Activated T-helper 2 cell treated with anti-CD3 and anti-CD28 coated beads, Interferon-gamma antibody, Interleukin-2, Interleukin-4, amounts not matched to agents 10 μg/mL and 5 μg/mL and 100 μg/mL, durations not matched to agents 14 hours and 24 hours and 36 hours (primary cell): ENCODE measurements at regions of chr2 and their contacts with region 1.

Region 1: DNA sequence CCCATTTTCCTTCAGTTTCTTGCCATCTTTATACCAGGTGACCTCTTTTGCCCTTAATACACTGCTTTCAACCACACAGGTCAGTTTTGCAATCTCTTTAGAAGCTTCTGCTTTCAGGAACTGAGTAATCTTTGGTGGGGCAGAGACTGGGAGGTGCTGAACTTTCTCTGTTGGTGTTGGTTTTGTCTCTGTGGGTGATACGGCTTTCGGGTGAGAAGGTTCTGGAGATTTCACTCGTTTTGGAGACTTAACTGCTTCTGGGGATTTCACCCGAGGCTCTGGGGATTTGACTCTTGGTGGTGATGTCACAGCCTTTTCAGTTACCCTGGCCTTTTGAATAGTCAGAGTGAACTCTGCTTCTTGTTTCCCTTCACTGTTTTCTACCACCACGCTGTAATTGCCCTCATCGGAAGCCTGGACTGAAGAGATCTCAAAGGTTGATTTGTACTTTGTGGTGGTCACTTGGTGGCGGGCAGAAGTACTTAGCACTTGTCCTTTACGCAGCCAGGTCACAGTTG is 50.4 kb downstream of the PLEKHA3 start:
- DNase-seq: peak; percentile 43
- H3K4me3 Mint-ChIP-seq: peak overlapping the region; percentile 54
- H3K27ac Mint-ChIP-seq: peak overlapping the region; percentile 76
- H3K4me1 Mint-ChIP-seq: peaks cover 62% of the 10 kb centered on the region
- H3K27me3 Mint-ChIP-seq: no peaks in the 10 kb centered on the region

Region 2: GRCh38 chr2:178331474-178332432 is 198.9 kb before region 1 on chr2:
- intact Hi-C with region 1: no loop called
- DNase-seq: no peak
- H3K4me3 Mint-ChIP-seq: no peak overlapping the region
- H3K27ac Mint-ChIP-seq: no peak overlapping the region
- H3K4me1 Mint-ChIP-seq: no peaks in the 10 kb centered on the region
- H3K27me3 Mint-ChIP-seq: peaks cover 4% of the 10 kb centered on the region

Region 3: DNA sequence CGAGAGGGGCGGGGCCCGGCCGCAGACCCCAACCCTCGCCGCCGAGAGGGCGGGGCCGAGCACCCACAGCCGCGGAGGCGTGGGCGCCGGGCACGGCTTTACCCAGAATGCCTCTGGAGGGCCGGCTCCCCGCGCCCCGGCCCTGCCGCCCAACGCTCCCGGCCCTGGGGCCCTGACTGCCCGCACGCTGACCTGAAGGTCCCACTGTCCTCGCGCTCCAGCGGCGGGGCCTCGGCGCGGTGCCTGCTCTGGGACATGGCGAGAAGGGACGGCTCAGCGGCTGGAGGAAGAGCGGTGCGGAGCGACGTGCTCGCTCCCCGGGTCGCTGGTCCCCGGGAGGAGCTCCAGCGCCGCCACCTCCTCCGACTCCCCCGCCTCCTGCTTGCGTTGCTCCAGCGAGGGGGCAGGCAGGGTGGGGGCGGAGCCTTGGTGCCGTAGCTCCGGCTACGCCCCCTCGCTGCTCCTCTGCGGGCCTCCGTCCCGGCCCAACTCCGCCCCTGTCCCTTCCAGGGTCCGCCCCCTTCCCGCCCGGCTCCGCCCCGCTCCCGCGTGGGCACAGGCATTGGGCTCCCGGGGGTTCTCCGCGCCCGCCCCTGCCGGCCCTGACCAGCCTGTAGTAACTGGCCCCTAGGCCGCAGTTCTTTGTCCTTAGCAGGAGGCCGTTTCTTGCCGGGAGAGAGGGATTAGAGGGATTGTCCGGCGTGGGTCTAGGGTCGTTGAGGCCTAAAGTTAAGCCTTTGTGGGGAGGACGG is 79.7 kb before region 1 on chr2 and contains the starts of genes PJVK and PRKRA:
- intact Hi-C with region 1: loop called (anchors 2 kb)
- DNase-seq: peak; percentile 94
- H3K4me3 Mint-ChIP-seq: peak within 1 kb of the TSS; percentile 92
- H3K27ac Mint-ChIP-seq: peak within 1 kb of the TSS; percentile 99
- H3K4me1 Mint-ChIP-seq: peaks cover 29% of the 10 kb centered on the region
- H3K27me3 Mint-ChIP-seq: peaks cover 6% of the 10 kb centered on the region
- total RNA-seq, gene PJVK: 1.7 and 2.0 TPM in 2 replicates
- total RNA-seq, gene PRKRA: 65.8 and 67.8 TPM in 2 replicates

Region 4: GRCh38 chr2:178478439-178479274 is 52.0 kb before region 1 on chr2 and contains the start of gene FKBP7:
- intact Hi-C with region 1: loop called (anchors 1 kb)
- DNase-seq: peak; percentile 74
- H3K4me3 Mint-ChIP-seq: peak within 1 kb of the TSS; percentile 90
- H3K27ac Mint-ChIP-seq: peak within 1 kb of the TSS; percentile 92
- H3K4me1 Mint-ChIP-seq: peaks cover 36% of the 10 kb centered on the region
- H3K27me3 Mint-ChIP-seq: no peaks in the 10 kb centered on the region
- total RNA-seq, gene FKBP7: 3.2 and 6.6 TPM in 2 replicates

Region 5: GRCh38 chr2:178514664-178515063 is 16.0 kb before region 1 on chr2:
- intact Hi-C with region 1: loop called (anchors 1 kb)
- DNase-seq: no peak
- H3K4me3 Mint-ChIP-seq: peak overlapping the region; percentile 58
- H3K27ac Mint-ChIP-seq: peak overlapping the region; percentile 78
- H3K4me1 Mint-ChIP-seq: peaks cover 27% of the 10 kb centered on the region
- H3K27me3 Mint-ChIP-seq: no peaks in the 10 kb centered on the region

Region 6: DNA sequence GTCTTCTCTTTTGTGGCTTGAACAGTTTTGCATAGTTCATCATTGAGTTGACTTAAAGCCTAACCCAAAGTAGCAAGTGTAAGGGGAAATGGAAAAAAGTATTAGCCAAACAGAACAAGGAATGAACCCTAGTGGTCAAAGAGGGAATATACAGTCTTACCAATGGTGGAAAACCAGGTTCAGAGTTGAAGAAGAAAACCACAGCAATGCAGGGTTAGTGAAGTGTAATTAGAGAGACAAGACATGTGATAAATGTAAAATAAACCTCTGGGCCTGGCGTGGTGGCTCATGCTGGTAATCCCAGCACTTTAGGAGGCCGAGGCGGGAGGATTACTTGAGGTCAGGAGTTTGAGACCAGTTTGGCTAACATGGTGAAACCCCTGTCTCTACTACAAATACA is 274.1 kb after region 1 on chr2:
- intact Hi-C with region 1: no loop called
- DNase-seq: no peak
- H3K4me3 Mint-ChIP-seq: no peak overlapping the region
- H3K27ac Mint-ChIP-seq: no peak overlapping the region
- H3K4me1 Mint-ChIP-seq: no peaks in the 10 kb centered on the region
- H3K27me3 Mint-ChIP-seq: no peaks in the 10 kb centered on the region

Region 7: DNA sequence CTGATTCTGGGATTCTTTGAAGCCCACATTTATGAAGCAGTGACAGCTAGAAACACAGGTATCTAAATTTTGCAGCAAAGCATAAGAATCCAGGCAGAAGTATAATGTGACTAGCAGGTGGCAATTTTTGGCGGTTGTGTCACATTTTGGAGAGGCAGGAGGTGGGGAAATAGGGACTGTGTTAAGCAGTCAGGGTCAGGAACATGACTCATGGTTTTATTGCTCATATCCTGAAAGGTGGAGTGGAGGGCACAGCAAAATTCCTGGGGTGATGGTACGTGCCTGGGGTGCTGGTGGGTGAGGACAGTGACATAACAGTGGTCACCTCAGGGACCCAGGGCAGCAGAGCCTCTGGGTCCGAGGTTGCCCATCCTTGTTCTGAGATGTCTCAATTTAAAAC is 340.0 kb after region 1 on chr2:
- intact Hi-C with region 1: loop called (anchors 5 kb)
- DNase-seq: no peak
- H3K4me3 Mint-ChIP-seq: no peak overlapping the region
- H3K27ac Mint-ChIP-seq: no peak overlapping the region
- H3K4me1 Mint-ChIP-seq: peaks cover 22% of the 10 kb centered on the region
- H3K27me3 Mint-ChIP-seq: no peaks in the 10 kb centered on the region

Region 8: DNA sequence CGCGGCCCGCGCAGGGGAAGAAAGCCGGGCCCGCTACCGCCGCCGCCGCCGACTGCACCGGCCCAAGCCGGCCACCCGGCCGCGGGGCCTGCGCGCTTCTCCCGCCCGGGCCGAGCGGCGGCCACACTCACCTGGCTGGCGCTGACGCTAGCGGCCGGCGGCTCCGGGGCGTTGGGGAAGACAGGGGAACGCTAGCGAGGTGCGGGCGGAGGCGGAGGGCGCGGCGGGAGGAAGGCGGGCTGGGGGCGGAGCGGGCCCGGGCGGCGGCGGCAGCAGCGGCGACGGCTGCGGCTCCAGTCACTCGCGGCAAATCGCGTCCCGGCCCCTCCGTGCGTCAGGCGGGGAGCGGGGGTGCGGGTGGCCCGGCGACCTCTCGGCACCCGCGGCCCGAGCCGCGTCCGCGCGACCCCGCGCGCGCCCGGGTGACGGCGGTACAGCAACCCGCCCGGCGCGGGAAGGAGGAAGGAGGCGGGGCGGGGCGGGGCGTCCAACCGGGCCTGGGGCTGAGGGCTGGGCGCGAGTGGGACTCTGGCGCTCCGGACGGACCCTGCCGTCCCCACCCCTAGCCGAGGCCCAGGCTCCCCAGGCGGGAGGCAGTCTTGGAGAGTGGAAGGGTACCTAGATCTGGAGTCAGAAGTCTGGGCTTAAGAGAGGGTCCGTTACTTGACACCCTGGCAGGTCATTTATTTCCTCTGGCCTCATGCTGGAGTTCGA is 733.8 kb after region 1 on chr2 and contains the start of gene SESTD1:
- intact Hi-C with region 1: loop called (anchors 5 kb)
- DNase-seq: peak; percentile 61
- H3K4me3 Mint-ChIP-seq: peak within 1 kb of the TSS; percentile 86
- H3K27ac Mint-ChIP-seq: peak within 1 kb of the TSS; percentile 74
- H3K4me1 Mint-ChIP-seq: peaks cover 18% of the 10 kb centered on the region
- H3K27me3 Mint-ChIP-seq: peaks cover 36% of the 10 kb centered on the region
- total RNA-seq, gene SESTD1: 9.8 and 14.3 TPM in 2 replicates